A673 (cell line): ENCODE measurements at regions of chrX and their contacts with region 1.

Region 1: GRCh38 chrX:116204932-116205331 is 34.4 kb downstream of the AGTR2 start:
- DNase-seq: peak; percentile 46
- H3K4me3 ChIP-seq: no peak overlapping the region
- H3K27ac ChIP-seq: no peak overlapping the region
- H3K4me1 ChIP-seq: no peaks in the 10 kb centered on the region
- H3K27me3 ChIP-seq: no peaks in the 10 kb centered on the region
- CTCF ChIP-seq: peak; percentile 76

Region 2: DNA sequence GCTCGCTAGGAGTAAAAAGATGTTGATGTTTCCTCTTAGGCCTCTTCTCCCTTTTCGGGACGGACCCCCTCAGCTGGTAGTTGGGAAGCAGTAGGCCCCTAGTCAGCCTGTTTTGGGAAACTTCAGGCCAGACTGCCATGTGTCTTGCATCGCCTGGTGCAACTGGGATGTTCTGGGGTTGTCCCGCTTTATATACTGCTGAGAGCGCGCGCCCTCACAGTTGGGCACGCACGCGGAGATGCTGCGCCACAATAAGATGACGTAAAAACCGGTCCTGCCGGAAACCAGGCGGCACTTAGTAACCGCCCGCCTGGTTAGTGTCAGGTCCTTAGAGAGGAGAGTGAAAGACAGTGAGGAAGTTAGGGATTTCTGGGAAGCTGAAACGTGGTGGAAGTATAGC is 489.1 kb after region 1 on chrX:
- CTCF ChIA-PET with region 1: no interaction called
- POLR2A ChIA-PET with region 1: no interaction called
- intact Hi-C with region 1: no loop called
- DNase-seq: no peak
- H3K4me3 ChIP-seq: no peak overlapping the region
- H3K27ac ChIP-seq: no peak overlapping the region
- H3K4me1 ChIP-seq: no peaks in the 10 kb centered on the region
- H3K27me3 ChIP-seq: no peaks in the 10 kb centered on the region
- CTCF ChIP-seq: no peak

Region 3: GRCh38 chrX:117996918-117997480 is 1792.1 kb after region 1 on chrX:
- CTCF ChIA-PET with region 1: no interaction called
- POLR2A ChIA-PET with region 1: no interaction called
- intact Hi-C with region 1: loop called (anchors 10 kb)
- DNase-seq: peak; percentile 57
- H3K4me3 ChIP-seq: no peak overlapping the region
- H3K27ac ChIP-seq: no peak overlapping the region
- H3K4me1 ChIP-seq: peaks cover 10% of the 10 kb centered on the region
- H3K27me3 ChIP-seq: no peaks in the 10 kb centered on the region
- CTCF ChIP-seq: peak; percentile 62